Activated CD4-positive, alpha-beta T cell treated with anti-CD3 and anti-CD28 coated beads for 36 hours (primary cell): ENCODE measurements at regions of chr2 and their contacts with region 1.

Region 1: DNA sequence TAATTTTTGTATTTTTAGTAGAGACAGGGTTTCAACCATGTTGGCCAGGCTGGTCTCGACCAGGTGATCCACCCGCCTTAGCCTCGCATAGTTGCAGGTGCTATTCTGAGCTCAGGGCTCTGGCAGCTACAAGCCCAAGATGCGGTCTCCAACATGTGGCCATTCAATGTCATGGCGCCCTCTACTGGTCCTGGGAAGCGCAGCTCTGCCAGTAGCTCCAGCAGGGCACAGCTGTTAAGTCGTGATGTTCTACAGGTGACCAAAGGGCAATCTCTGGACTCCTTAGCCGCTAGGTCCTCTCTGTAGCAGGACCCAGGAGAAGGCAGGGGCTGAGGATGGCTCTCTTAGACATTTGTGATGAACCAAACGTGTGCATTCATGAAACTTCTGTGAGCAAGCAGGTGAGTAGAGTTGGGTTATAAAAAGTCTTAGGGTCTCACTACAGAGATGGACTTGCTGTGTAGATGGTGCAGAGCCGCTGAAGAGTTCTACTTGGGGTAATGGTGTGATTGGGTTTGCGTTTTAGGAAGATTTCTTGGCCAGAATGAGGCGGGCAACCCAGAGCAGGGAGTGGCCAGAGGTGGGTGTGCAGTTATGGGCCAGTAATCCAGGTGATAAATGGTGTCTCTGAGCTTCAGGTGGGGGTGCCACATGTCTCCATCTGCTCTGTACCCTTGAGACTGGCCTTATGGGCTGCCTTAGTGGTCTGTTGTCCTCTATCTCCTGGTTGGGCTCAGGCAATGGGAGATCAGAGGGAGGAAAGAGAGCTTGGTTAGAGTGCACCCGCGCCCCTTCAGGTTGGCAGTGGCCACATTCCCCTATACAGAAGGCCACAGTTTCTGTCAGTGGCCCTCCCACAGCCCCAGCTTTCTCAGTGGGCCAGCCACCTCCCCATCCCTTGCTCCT is 31.0 kb downstream of the IL37 start:
- DNase-seq: peak; percentile 89
- ATAC-seq: peak; percentile 96
- H3K4me3 Mint-ChIP-seq: no peak overlapping the region
- H3K27ac Mint-ChIP-seq: no peak overlapping the region
- H3K4me1 Mint-ChIP-seq: no peaks in the 10 kb centered on the region
- H3K27me3 Mint-ChIP-seq: no peaks in the 10 kb centered on the region

Region 2: DNA sequence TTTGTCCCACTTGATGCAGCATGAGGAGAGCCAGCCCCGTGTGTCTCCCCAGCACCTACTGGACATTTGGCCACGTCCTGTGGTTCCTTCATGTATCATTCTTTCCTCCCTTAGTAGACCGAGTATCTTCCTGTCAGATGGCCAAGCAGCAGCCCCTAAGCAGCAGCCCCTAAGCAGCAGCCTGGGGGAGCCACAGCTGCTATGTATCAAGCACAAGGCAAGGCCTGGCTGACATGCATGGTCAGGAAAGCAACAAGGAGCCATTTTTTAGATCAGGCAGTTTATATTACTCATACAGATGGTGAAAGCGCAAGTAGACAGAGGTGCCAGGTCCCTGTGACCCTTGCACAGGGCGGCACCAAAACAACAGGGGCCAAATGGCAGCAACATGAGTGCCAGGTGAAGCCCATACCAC is 335.5 kb before region 1 on chr2:
- CTCF ChIA-PET with region 1: interaction called, 3 read pairs
- POLR2A ChIA-PET with region 1: no interaction called
- intact Hi-C with region 1: loop called in 1 of 2 experiments (anchors 2 kb)
- DNase-seq: no peak
- ATAC-seq: no peak
- H3K4me3 Mint-ChIP-seq: no peak overlapping the region
- H3K27ac Mint-ChIP-seq: no peak overlapping the region
- H3K4me1 Mint-ChIP-seq: no peaks in the 10 kb centered on the region
- H3K27me3 Mint-ChIP-seq: no peaks in the 10 kb centered on the region

Region 3: DNA sequence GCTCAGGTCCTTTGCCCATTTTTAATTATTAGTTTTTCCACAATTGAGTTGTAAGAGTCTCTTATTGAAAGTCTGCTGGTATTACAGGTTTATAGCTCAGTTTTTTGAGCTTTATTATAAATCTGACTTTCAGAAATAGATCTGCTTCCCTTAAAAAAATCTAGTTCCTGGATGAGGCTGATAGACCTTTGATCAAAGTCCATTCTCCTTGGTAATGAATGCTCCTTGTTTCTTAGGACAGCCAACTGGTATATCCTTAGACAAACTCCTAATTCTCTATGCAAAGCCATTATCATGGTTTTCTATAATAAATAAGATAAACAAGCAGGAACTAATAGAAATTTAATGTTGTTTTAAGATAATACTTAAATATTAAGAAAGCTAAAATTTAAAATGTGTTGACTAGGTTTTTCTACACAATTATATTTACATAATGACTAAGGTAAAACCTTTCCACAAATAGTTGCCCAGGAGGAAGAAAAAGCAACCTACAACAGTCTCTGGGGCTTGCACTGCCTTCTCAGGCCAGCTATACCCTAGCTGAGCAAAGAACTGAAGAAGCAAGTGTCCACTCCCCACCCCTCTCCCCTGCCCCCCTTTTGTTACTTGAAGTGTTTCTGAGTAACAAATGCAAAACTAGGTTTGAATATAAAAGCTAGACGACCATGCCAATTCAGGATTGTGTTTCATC is 204.3 kb before region 1 on chr2:
- CTCF ChIA-PET with region 1: interaction called, 18 read pairs
- POLR2A ChIA-PET with region 1: no interaction called
- intact Hi-C with region 1: no loop called
- DNase-seq: no peak
- ATAC-seq: no peak
- H3K4me3 Mint-ChIP-seq: no peak overlapping the region
- H3K27ac Mint-ChIP-seq: no peak overlapping the region
- H3K4me1 Mint-ChIP-seq: peaks cover 4% of the 10 kb centered on the region
- H3K27me3 Mint-ChIP-seq: no peaks in the 10 kb centered on the region

Region 4: DNA sequence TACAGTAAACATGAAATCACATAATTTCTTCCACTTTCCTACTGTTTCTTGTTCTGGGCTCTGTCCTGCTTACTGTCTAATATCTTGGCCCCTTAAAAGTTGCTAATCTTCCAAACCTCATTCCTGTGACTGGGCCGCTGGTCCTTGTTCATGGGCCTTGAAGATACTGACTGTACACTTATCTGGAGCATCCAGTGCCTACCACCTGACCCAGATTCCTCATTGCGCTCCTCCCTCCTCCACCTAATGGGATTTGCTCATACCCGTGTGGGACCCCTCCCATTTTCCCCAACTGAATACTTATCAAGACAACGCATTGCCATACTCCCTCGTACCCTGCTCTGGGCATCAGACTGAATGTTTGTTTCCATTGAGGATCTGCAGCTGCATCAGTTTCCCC is 37.1 kb before region 1 on chr2:
- CTCF ChIA-PET with region 1: interaction called, 14 read pairs
- POLR2A ChIA-PET with region 1: no interaction called
- intact Hi-C with region 1: no loop called
- DNase-seq: no peak
- ATAC-seq: no peak
- H3K4me3 Mint-ChIP-seq: no peak overlapping the region
- H3K27ac Mint-ChIP-seq: no peak overlapping the region
- H3K4me1 Mint-ChIP-seq: no peaks in the 10 kb centered on the region
- H3K27me3 Mint-ChIP-seq: no peaks in the 10 kb centered on the region

Region 5: DNA sequence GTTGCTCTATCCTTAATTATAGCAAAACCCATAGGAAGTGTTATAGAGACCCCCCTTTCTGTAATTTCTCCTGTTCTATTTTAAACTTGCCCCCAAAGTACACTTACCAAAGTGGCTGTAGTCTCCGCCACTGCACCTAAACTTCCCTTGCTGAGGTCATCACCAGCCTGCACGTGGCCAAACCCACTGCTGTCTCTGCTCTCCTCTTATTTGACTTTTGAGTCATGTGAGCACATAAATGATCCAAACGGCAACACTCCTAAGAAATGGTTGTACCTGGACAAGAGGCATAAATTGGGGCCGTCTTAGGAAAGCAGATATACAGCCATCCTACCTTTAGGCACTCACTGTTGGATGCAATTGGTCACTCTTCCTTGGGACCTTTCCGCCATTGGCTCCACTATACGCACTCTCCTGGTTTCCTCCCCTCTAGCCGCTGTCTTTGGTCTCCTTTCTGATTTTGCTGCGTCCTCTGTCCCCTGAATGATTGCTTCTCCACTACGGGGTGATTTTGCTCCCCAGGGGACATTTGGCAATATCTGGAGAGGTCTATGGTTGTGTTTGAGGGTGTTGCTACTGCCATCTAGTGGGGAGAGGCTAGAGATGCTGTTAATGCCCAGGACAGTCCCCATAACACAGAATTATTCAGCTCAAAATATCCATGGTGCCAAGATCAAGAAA is 16.6 kb after region 1 on chr2:
- CTCF ChIA-PET with region 1: interaction called, 45 read pairs
- POLR2A ChIA-PET with region 1: no interaction called
- intact Hi-C with region 1: no loop called
- DNase-seq: peak; percentile 48
- ATAC-seq: peak; percentile 94
- H3K4me3 Mint-ChIP-seq: no peak overlapping the region
- H3K27ac Mint-ChIP-seq: no peak overlapping the region
- H3K4me1 Mint-ChIP-seq: no peaks in the 10 kb centered on the region
- H3K27me3 Mint-ChIP-seq: no peaks in the 10 kb centered on the region

Region 6: GRCh38 chr2:113007250-113007649 is 65.2 kb after region 1 on chr2:
- CTCF ChIA-PET with region 1: no interaction called
- POLR2A ChIA-PET with region 1: no interaction called
- intact Hi-C with region 1: no loop called
- DNase-seq: no peak
- ATAC-seq: no peak
- H3K4me3 Mint-ChIP-seq: no peak overlapping the region
- H3K27ac Mint-ChIP-seq: no peak overlapping the region
- H3K4me1 Mint-ChIP-seq: peaks cover 4% of the 10 kb centered on the region
- H3K27me3 Mint-ChIP-seq: no peaks in the 10 kb centered on the region